H1 (cell line): ENCODE measurements at regions of chr3 and their contacts with region 1.

Region 1: DNA sequence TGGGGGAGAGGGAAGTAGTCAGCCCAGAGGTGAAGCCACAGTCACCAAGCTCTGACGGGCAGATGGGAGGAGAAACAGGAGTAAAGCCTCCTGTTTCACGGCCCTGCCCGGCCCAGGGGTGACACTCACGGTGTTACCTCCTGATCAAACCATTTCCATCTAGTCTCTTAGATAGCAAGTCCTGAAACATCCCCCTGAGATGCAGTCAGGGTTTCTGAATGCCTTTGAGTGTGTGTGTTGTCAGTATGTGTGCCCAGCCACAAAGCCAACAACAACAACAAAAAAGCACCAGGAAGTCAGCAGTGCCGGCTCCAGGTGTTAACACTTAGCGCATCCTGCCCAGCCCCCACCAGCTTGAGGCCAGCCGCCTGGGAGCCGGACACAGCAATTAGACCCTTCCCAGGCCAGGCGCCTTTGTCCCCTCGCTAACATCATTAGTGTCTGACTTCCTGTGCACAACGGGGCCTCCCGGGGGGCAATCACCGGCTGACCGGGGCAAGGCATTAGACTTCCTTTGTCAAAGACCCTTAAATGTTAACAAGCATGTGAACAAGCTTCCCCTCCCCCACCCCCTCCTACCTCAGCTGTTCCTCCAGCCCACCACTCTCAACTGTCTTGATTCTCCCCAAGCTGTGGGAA is 34.5 kb downstream of the IL17RD start:
- DNase-seq: peak; percentile 94 to 99
- H3K4me3 ChIP-seq: peak overlapping the region in 2 of 4 experiments; percentile 1 to 36; a peak in 3 of 8 replicates
- H3K27ac ChIP-seq: peak overlapping the region; percentile 80; the same call in 1 of the 2 replicates
- H3K4me1 ChIP-seq: peaks cover 23 to 55% (median 43%) of the 10 kb centered on the region in 4 experiments
- H3K27me3 ChIP-seq: peaks cover under 1 to 5% (median 2%) of the 10 kb centered on the region in 4 experiments; a peak in 5 of 7 replicates
- CTCF ChIP-seq: no peak
- EP300 ChIP-seq: peak; percentile 53 to 95
- POLR2A ChIP-seq: peak; percentile 62 to 68
- RAD21 ChIP-seq: 0 out of 4 replicates have a peak, but pooled peaks of 1 of the 2 experiments have one; percentile 9

Region 2: DNA sequence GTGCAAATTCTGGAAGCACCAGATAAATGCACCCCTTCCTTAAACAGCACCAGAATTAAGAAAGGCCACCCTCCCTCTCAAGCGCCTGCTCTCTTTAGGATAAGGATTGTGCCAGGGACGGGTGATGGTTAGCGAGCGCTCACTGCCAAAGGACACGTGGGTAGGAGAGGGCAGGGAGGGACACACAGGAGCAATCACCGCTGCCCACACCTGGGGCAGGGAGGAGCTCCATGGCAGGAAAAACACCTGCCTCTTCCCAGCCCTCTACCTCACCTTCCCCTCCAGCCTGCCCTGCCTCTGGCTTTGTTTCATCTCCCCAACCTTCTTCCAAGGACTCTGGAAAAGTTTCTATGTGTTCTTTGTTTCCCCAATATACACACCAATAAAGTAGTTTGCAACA is 77.6 kb before region 1 on chr3:
- CTCF ChIA-PET with region 1: no interaction called
- POLR2A ChIA-PET with region 1: no interaction called
- DNase-seq: no peak
- H3K4me3 ChIP-seq: no peak overlapping the region
- H3K27ac ChIP-seq: no peak overlapping the region
- H3K4me1 ChIP-seq: no peaks in the 10 kb centered on the region; a peak in 1 of 7 replicates
- H3K27me3 ChIP-seq: no peaks in the 10 kb centered on the region
- CTCF ChIP-seq: no peak
- EP300 ChIP-seq: no peak
- POLR2A ChIP-seq: no peak
- RAD21 ChIP-seq: no peak

Region 3: DNA sequence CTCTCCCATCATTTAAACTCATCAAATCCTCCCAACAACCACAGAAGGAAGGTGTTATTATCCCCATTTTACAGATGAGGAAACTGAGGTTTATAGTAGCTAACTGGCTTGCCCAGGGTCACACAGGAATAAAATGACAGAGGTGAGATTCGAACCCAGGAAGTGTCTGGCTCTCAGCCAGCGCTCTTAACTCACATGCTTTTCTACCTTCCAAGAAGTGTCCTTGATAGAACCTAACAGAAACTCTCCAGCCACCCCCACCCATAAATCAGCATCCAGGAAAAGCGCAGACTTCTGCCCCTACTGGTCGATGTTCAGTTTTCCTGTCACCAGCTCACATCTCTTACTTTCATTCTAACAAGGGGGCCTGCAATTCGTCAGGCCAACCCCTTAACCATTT is 18.5 kb before region 1 on chr3:
- CTCF ChIA-PET with region 1: interaction called, 39 read pairs
- POLR2A ChIA-PET with region 1: interaction called, 19 read pairs
- DNase-seq: no peak
- H3K4me3 ChIP-seq: no peak overlapping the region
- H3K27ac ChIP-seq: no peak overlapping the region
- H3K4me1 ChIP-seq: peaks cover 0 to 12% (median 8%) of the 10 kb centered on the region in 4 experiments; a peak in 4 of 7 replicates
- H3K27me3 ChIP-seq: no peaks in the 10 kb centered on the region
- CTCF ChIP-seq: peak; percentile 30 to 53 (median 34); a peak in 3 of 4 replicates
- EP300 ChIP-seq: no peak
- POLR2A ChIP-seq: no peak
- RAD21 ChIP-seq: peak in 1 of 2 experiments; percentile 34; a peak in 1 of 4 replicates

Region 4: GRCh38 chr3:57141719-57142410 is 11.2 kb after region 1 on chr3:
- CTCF ChIA-PET with region 1: interaction called, 11 read pairs
- POLR2A ChIA-PET with region 1: interaction called, 39 read pairs
- DNase-seq: no peak
- H3K4me3 ChIP-seq: peak overlapping the region in 1 of 4 experiments; percentile 3; a peak in 2 of 8 replicates
- H3K27ac ChIP-seq: no peak overlapping the region
- H3K4me1 ChIP-seq: peaks cover 6 to 19% (median 12%) of the 10 kb centered on the region in 4 experiments; a peak in 6 of 7 replicates
- H3K27me3 ChIP-seq: no peaks in the 10 kb centered on the region
- CTCF ChIP-seq: peak in 2 of 3 experiments; percentile 1 to 3; a peak in 1 of 4 replicates
- EP300 ChIP-seq: no peak
- POLR2A ChIP-seq: no peak
- RAD21 ChIP-seq: peak; percentile 15 to 48; a peak in 3 of 4 replicates

Region 5: GRCh38 chr3:57158813-57159738 is 28.4 kb after region 1 on chr3:
- CTCF ChIA-PET with region 1: interaction called, 10 read pairs
- POLR2A ChIA-PET with region 1: interaction called, 62 read pairs
- DNase-seq: peak in 1 of 2 experiments; percentile 51
- H3K4me3 ChIP-seq: peak overlapping the region in 1 of 4 experiments; percentile 19; a peak in 1 of 8 replicates
- H3K27ac ChIP-seq: no peak overlapping the region
- H3K4me1 ChIP-seq: peaks cover 13 to 51% (median 28%) of the 10 kb centered on the region in 4 experiments
- H3K27me3 ChIP-seq: peaks cover 6 to 47% (median 23%) of the 10 kb centered on the region in 4 experiments
- CTCF ChIP-seq: peak in 1 of 3 experiments; percentile 2; a peak in 1 of 4 replicates
- EP300 ChIP-seq: no peak
- POLR2A ChIP-seq: no peak
- RAD21 ChIP-seq: 0 out of 4 replicates have a peak, but pooled peaks of 1 of the 2 experiments have one; percentile 10

Region 6: DNA sequence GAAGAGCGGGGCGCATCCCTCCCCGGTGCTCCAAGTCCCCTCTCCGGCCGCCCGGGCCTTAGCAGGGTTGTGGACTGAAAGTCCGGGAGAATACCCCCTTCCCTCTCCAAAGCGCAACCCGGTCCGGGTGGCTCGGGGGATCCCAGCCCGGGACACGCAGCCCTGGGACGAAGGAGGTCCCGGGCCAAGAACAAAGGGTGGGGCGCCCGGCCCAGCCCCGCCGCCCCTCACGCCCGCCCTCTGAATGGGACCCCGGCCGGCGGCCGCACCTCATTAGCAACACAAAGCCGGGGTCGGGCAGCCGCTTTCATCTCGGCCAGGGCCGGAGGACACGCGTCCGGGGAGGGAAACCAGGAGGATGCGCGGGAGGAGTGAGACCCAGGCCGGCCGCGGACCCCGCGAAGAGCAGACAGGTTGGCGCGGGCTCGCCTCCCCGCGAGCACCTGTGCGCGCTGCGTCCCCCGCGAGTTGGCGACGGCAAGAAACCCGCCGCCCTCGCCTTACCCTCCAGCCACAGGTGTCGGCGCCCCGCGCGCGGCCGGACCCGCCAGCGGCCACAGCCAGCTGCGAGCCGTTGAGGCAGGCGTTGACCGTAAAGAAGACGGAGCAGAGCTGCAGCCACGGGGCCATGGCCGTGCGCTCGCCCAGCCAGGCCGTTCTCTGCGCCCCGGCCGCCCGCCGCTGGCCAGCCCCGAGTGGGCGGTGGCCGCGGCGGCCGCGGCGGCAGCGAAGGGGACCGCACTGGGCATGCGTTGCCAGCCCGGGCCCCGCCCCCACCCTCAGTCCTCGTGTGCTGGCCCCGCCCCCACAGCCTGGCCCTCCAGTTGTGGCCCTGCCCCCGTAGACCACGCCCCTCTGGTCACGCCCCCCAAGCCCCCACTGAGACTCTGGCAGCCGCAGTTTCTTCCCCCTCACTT is 34.2 kb after region 1 on chr3 and contains the start of gene IL17RD:
- CTCF ChIA-PET with region 1: interaction called, 10 read pairs
- POLR2A ChIA-PET with region 1: interaction called, 62 read pairs
- DNase-seq: peak; percentile 65 to 92
- H3K4me3 ChIP-seq: peak within 1 kb of the TSS; percentile 67 to 83 (median 72)
- H3K27ac ChIP-seq: 0 out of 2 replicates have a peak within 1 kb of the TSS, but pooled peaks have one; percentile 24
- H3K4me1 ChIP-seq: peaks cover 10 to 42% (median 25%) of the 10 kb centered on the region in 4 experiments
- H3K27me3 ChIP-seq: peaks cover 6 to 28% (median 23%) of the 10 kb centered on the region in 4 experiments
- CTCF ChIP-seq: no peak
- EP300 ChIP-seq: 0 out of 3 replicates have a peak, but pooled peaks of 1 of the 2 experiments have one; percentile 22
- POLR2A ChIP-seq: no peak
- RAD21 ChIP-seq: no peak
- total RNA-seq, gene IL17RD: 41.3 and 48.9 TPM in 2 replicates